Naive thymus-derived CD4-positive, alpha-beta T cell (primary cell): ENCODE measurements at regions of chr1 and their contacts with region 1.

Region 1: DNA sequence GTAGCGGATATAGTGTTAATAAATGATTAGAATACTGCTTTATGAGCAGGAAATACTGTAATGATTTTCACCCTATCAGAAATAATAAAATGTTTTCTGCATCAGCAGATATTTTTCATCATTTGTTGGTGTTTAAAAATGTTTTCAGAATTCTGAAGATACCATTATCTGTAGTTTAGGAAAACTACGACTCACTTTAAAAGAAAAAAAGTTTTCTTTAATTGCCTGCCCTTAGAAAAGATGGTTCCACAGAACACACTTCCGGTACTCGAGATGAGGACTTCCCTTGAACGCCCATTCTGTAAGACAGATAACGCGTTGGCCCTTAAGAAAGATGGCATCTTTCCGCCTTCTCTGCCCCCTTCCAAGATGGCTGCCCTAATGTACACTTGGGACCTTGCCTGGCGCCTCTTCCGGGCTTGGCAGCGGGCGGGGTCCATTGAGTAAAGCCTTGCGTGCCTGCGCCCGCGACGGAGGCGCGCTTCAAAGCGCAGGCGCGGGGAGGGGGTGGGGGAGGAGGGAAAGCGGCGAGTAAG is at the start of gene SZRD1:
- DNase-seq: peak; percentile 81 to 98 (median 96)
- ATAC-seq: peak; percentile 94
- H3K4me3 ChIP-seq: peak within 1 kb of the TSS; percentile 98
- H3K4me3 Mint-ChIP-seq: peak within 1 kb of the TSS; percentile 93 to 99 (median 96)
- H3K27ac ChIP-seq: peak within 1 kb of the TSS; percentile 99
- H3K27ac Mint-ChIP-seq: peak within 1 kb of the TSS; percentile 90 to 99 (median 97)
- H3K4me1 ChIP-seq: peaks cover 19 to 26% of the 10 kb centered on the region in 2 donors
- H3K4me1 Mint-ChIP-seq: peaks cover 15 to 43% (median 38%) of the 10 kb centered on the region in 7 donors
- H3K27me3 ChIP-seq: no peaks in the 10 kb centered on the region
- H3K27me3 Mint-ChIP-seq: no peaks in the 10 kb centered on the region
- total RNA-seq, gene SZRD1: 81.6 to 163 (median 125) TPM

Region 2: DNA sequence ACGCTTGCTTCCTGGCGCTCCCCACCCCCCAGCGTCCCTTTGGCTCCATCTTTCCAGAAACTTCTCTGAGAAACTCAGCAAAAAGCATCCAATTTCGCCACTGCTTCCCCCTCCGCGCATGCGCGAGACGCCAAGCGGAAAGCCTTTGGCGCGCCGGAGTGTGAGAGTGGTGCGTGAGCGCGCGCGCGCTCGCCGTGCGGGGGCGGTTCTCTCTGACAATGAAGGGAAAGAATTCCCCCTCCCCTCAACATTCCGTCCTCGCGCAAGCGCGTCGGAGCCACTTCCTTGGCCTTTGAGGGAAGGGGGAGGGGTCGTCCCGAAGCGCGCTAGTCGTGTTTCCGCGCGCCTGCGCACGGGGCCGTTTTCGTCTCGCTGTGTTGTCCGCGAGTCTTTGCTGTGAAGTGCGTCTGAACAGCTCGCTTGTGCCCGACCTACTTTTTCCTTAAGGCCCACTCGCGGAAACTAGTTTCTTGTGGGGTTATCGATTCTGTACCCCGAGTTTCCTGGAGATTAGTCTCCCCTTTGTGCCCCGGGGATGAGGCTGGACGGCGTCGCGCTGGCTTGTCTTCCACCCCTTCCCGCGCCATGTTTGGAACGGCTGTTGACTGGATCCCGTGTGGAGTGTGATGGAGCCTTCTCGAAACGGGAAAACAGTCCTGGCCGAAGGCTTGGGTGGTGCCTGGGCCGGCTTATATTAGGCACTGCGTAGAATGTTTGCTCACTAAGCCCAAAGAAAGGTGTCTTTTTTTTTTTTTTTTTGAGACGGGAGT is 530.9 kb before region 1 on chr1:
- CTCF ChIA-PET with region 1: no interaction called
- POLR2A ChIA-PET with region 1: no interaction called
- intact Hi-C with region 1: loop called (anchors 1 to 2 kb)
- DNase-seq: peak; percentile 96 to 99 (median 98)
- ATAC-seq: peak; percentile 77
- H3K4me3 ChIP-seq: peak overlapping the region; percentile 100
- H3K4me3 Mint-ChIP-seq: peak overlapping the region; percentile 88 to 100 (median 96)
- H3K27ac ChIP-seq: peak overlapping the region; percentile 98
- H3K27ac Mint-ChIP-seq: peak overlapping the region; percentile 98 to 100 (median 99)
- H3K4me1 ChIP-seq: peaks cover 12 to 16% of the 10 kb centered on the region in 2 donors
- H3K4me1 Mint-ChIP-seq: peaks cover 5 to 35% (median 24%) of the 10 kb centered on the region in 7 donors
- H3K27me3 ChIP-seq: no peaks in the 10 kb centered on the region
- H3K27me3 Mint-ChIP-seq: peaks cover 0 to 3% (median 0%) of the 10 kb centered on the region in 5 donors

Region 3: GRCh38 chr1:15918962-15919715 is 447.7 kb before region 1 on chr1:
- CTCF ChIA-PET with region 1: no interaction called
- POLR2A ChIA-PET with region 1: no interaction called
- intact Hi-C with region 1: no loop called
- DNase-seq: peak in 1 of 9 donors; percentile 74
- ATAC-seq: peak; percentile 68
- H3K4me3 ChIP-seq: no peak overlapping the region
- H3K4me3 Mint-ChIP-seq: peak overlapping the region in 4 of 10 donors; percentile 8 to 76 (median 20)
- H3K27ac ChIP-seq: no peak overlapping the region
- H3K27ac Mint-ChIP-seq: peak overlapping the region in 7 of 9 donors; percentile 16 to 77 (median 33)
- H3K4me1 ChIP-seq: peaks cover 10 to 22% of the 10 kb centered on the region in 2 donors
- H3K4me1 Mint-ChIP-seq: peaks cover 9 to 40% (median 31%) of the 10 kb centered on the region in 7 donors
- H3K27me3 ChIP-seq: no peaks in the 10 kb centered on the region
- H3K27me3 Mint-ChIP-seq: no peaks in the 10 kb centered on the region

Region 4: DNA sequence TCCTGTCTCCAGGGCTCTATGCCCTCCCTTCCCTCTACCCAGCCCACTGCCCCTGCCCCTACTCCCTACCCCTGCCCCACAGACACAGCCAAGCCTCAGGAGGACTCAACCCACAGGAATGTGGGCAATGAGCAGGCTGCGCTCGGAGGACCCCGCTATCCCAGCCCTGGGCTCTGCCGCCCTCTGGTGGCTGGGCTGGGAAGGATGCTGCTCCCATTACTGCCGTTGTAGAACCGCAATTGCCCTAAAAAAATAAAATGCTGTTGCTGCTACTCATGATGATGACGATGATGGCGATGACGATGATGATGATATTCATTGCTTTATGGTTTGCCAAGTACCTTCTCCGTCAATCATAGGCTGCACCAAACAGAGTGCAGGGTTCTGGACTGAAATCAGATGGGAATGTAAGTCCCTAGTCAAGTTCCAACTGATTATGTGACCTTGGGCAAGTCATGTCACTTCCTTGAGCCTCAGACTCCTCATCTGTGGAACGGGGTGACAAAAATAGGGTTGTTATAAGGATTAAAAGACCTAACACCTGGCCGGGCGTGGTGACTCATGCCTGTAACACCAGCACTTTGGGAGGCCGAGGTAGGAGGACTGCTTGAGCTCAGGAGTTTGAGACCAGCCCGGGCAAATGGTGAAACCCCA is 178.9 kb before region 1 on chr1:
- CTCF ChIA-PET with region 1: no interaction called
- POLR2A ChIA-PET with region 1: no interaction called
- intact Hi-C with region 1: loop called in 1 of 2 experiments (anchors 1 kb)
- DNase-seq: peak; percentile 59 to 87 (median 75)
- ATAC-seq: peak; percentile 94
- H3K4me3 ChIP-seq: no peak overlapping the region
- H3K4me3 Mint-ChIP-seq: no peak overlapping the region
- H3K27ac ChIP-seq: no peak overlapping the region
- H3K27ac Mint-ChIP-seq: no peak overlapping the region
- H3K4me1 ChIP-seq: peaks cover 0 to 4% of the 10 kb centered on the region in 2 donors
- H3K4me1 Mint-ChIP-seq: peaks cover 0 to 7% (median 0%) of the 10 kb centered on the region in 7 donors
- H3K27me3 ChIP-seq: no peaks in the 10 kb centered on the region
- H3K27me3 Mint-ChIP-seq: peaks cover 0 to 13% (median 0%) of the 10 kb centered on the region in 5 donors

Region 5: GRCh38 chr1:16243936-16244649 is 122.7 kb before region 1 on chr1:
- CTCF ChIA-PET with region 1: interaction called, 3 read pairs
- POLR2A ChIA-PET with region 1: no interaction called
- intact Hi-C with region 1: loop called in 1 of 2 experiments (anchors 1 kb)
- DNase-seq: peak; percentile 38 to 77 (median 68)
- ATAC-seq: peak; percentile 94
- H3K4me3 ChIP-seq: no peak overlapping the region
- H3K4me3 Mint-ChIP-seq: no peak overlapping the region
- H3K27ac ChIP-seq: no peak overlapping the region
- H3K27ac Mint-ChIP-seq: peak overlapping the region in 4 of 9 donors; percentile 21 to 92 (median 65)
- H3K4me1 ChIP-seq: peaks cover 0 to 5% of the 10 kb centered on the region in 2 donors
- H3K4me1 Mint-ChIP-seq: peaks cover 9 to 21% (median 17%) of the 10 kb centered on the region in 7 donors
- H3K27me3 ChIP-seq: no peaks in the 10 kb centered on the region
- H3K27me3 Mint-ChIP-seq: no peaks in the 10 kb centered on the region

Region 6: GRCh38 chr1:16420424-16421118 is 53.8 kb after region 1 on chr1:
- CTCF ChIA-PET with region 1: no interaction called
- POLR2A ChIA-PET with region 1: interaction called, 16 read pairs
- intact Hi-C with region 1: loop called (anchors 1 to 5 kb)
- DNase-seq: peak in 8 of 9 donors; percentile 42 to 66 (median 58)
- ATAC-seq: peak; percentile 92
- H3K4me3 ChIP-seq: peak overlapping the region; percentile 36
- H3K4me3 Mint-ChIP-seq: peak overlapping the region; percentile 62 to 88 (median 75)
- H3K27ac ChIP-seq: peak overlapping the region; percentile 55
- H3K27ac Mint-ChIP-seq: peak overlapping the region; percentile 69 to 95 (median 84)
- H3K4me1 ChIP-seq: peaks cover 22 to 26% of the 10 kb centered on the region in 2 donors
- H3K4me1 Mint-ChIP-seq: peaks cover 23 to 38% (median 33%) of the 10 kb centered on the region in 7 donors
- H3K27me3 ChIP-seq: no peaks in the 10 kb centered on the region
- H3K27me3 Mint-ChIP-seq: no peaks in the 10 kb centered on the region

Region 7: GRCh38 chr1:16904560-16905111 is 537.8 kb after region 1 on chr1:
- CTCF ChIA-PET with region 1: no interaction called
- POLR2A ChIA-PET with region 1: no interaction called
- intact Hi-C with region 1: loop called (anchors 1 kb)
- DNase-seq: peak; percentile 97 to 100 (median 99)
- ATAC-seq: peak; percentile 95
- H3K4me3 ChIP-seq: peak overlapping the region; percentile 69
- H3K4me3 Mint-ChIP-seq: no peak overlapping the region
- H3K27ac ChIP-seq: peak overlapping the region; percentile 98
- H3K27ac Mint-ChIP-seq: no peak overlapping the region
- H3K4me1 ChIP-seq: peaks cover 11 to 25% of the 10 kb centered on the region in 2 donors
- H3K4me1 Mint-ChIP-seq: peaks cover 26 to 51% (median 38%) of the 10 kb centered on the region in 7 donors
- H3K27me3 ChIP-seq: no peaks in the 10 kb centered on the region
- H3K27me3 Mint-ChIP-seq: peaks cover 0 to 4% (median 0%) of the 10 kb centered on the region in 5 donors

Region 8: GRCh38 chr1:18279351-18280074 is 1912.7 kb after region 1 on chr1:
- CTCF ChIA-PET with region 1: no interaction called
- POLR2A ChIA-PET with region 1: no interaction called
- intact Hi-C with region 1: no loop called
- DNase-seq: no peak
- ATAC-seq: no peak
- H3K4me3 ChIP-seq: no peak overlapping the region
- H3K4me3 Mint-ChIP-seq: no peak overlapping the region
- H3K27ac ChIP-seq: no peak overlapping the region
- H3K27ac Mint-ChIP-seq: no peak overlapping the region
- H3K4me1 ChIP-seq: no peaks in the 10 kb centered on the region
- H3K4me1 Mint-ChIP-seq: peaks cover 0 to 2% (median 0%) of the 10 kb centered on the region in 7 donors
- H3K27me3 ChIP-seq: no peaks in the 10 kb centered on the region
- H3K27me3 Mint-ChIP-seq: peaks cover 0 to 60% (median 34%) of the 10 kb centered on the region in 5 donors